ENCODE measurements at regions of chr15 and their contacts with region 1.

Region 1: GRCh38 chr15:38490242-38490922 is 36.5 kb downstream of the FAM98B start:
- DNase-seq: no peak
- ATAC-seq: no peak
- H3K4me3 ChIP-seq: no peak overlapping the region
- H3K27ac ChIP-seq: no peak overlapping the region
- H3K4me1 ChIP-seq: no peaks in the 10 kb centered on the region
- H3K27me3 ChIP-seq: no peaks in the 10 kb centered on the region
- CTCF ChIP-seq: no peak

Region 2: GRCh38 chr15:38378161-38378560 is 112.2 kb before region 1 on chr15:
- intact Hi-C with region 1: no loop called
- DNase-seq: peak; percentile 66 to 78
- ATAC-seq: peak; percentile 74 to 88 (median 81)
- H3K4me3 ChIP-seq: no peak overlapping the region
- H3K27ac ChIP-seq: peak overlapping the region; percentile 22 to 80 (median 68)
- H3K4me1 ChIP-seq: peaks cover 4 to 54% (median 33%) of the 10 kb centered on the region in 9 donors
- H3K27me3 ChIP-seq: no peaks in the 10 kb centered on the region
- CTCF ChIP-seq: no peak

Region 3: DNA sequence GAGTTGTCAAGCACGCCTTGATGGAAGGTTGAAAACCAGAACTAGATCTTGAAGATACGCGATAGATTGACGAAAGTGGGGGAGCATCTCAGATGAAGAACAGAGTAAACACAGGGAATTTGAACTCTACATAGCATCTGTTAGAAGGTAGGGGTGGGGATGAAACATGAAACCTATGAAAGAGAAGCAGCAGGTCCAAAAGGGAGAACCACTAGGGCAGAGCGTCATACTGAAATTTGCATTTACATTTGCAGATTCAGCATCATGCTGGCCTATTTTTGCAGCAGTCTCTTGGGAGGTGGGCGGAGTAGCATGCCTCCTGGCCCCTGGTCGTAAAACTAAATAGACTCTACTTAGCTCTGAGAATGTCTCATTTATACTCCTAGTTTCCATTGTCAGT is 120.4 kb after region 1 on chr15:
- intact Hi-C with region 1: no loop called
- DNase-seq: no peak
- ATAC-seq: no peak
- H3K4me3 ChIP-seq: no peak overlapping the region
- H3K27ac ChIP-seq: no peak overlapping the region
- H3K4me1 ChIP-seq: peaks cover 0 to 3% (median 0%) of the 10 kb centered on the region in 9 donors
- H3K27me3 ChIP-seq: peaks cover 0 to 8% (median 0%) of the 10 kb centered on the region in 7 donors
- CTCF ChIP-seq: no peak

Region 4: DNA sequence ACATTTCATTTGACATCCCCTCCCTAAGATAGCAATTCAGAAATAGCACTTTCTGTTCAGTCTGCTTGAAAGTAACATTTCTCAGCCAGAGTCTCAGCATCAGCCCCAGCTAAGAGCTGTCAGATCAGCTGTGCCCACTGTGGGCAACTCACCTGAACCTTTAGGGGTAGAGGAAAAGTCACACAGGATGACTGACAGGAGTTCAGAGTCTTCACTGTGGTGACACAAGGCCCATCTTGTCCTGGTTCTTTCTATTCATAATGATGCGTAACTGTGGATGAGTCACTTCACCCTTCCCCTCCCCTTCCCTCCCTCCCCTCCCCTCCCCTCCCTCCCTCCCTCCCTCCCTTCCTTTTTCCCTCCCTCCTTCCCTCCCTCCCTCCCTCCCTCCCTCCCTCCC is 170.4 kb after region 1 on chr15:
- intact Hi-C with region 1: loop called in 1 of 10 experiments (anchors 10 kb)
- DNase-seq: no peak
- ATAC-seq: no peak
- H3K4me3 ChIP-seq: no peak overlapping the region
- H3K27ac ChIP-seq: no peak overlapping the region
- H3K4me1 ChIP-seq: no peaks in the 10 kb centered on the region
- H3K27me3 ChIP-seq: peaks cover 0 to 9% (median 0%) of the 10 kb centered on the region in 7 donors
- CTCF ChIP-seq: no peak

Measured in heart right ventricle (tissue), 16 donors.